ENCODE measurements at regions of chr1 and their contacts with region 1.

Region 1: DNA sequence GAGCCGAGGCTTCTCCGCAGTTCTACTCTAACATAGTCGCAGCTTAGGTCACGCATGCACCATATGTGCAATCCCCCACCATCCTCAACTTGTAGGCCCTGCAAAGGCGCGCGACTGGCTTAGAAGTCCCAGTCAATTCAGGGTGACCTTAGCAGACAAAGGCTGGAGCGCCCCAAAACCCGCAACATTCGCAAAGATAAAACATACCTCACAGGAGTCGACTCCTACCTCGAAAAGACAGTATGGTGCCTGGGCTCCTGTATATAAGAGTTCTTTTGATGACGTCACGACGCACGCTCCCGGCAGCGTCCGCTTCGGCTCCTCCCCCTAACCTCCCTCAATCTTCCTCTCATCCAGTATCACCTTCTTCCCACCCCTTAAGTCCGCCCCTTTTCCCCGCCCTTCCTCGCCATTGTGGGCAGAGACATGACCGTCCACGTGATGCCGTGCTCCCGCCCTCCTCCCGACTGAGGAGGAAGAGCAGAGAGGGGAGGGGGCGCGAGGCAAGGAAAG is at the start of gene GAS5:
- DNase-seq: peak; percentile 99 to 100 (median 99)
- ATAC-seq: peak; percentile 94 to 97 (median 96)
- H3K4me3 ChIP-seq: peak within 1 kb of the TSS; percentile 47 to 95 (median 85)
- H3K27ac ChIP-seq: peak within 1 kb of the TSS; percentile 94 to 99 (median 98)
- H3K4me1 ChIP-seq: peaks cover 8 to 70% (median 48%) of the 10 kb centered on the region in 12 donors
- H3K27me3 ChIP-seq: no peaks in the 10 kb centered on the region
- CTCF ChIP-seq: no peak
- POLR2A ChIP-seq: peak; percentile 94 to 99
- total RNA-seq, gene GAS5: 30.4 to 103 (median 43.6) TPM

Region 2: GRCh38 chr1:173476664-173477285 is 391.0 kb before region 1 on chr1:
- intact Hi-C with region 1: loop called in 2 of 10 experiments (anchors 2 to 5 kb)
- DNase-seq: peak; percentile 92 to 97 (median 94)
- ATAC-seq: peak; percentile 88 to 92 (median 91)
- H3K4me3 ChIP-seq: peak overlapping the region; percentile 52 to 96 (median 79)
- H3K27ac ChIP-seq: peak overlapping the region; percentile 66 to 99 (median 96)
- H3K4me1 ChIP-seq: peaks cover 0 to 61% (median 50%) of the 10 kb centered on the region in 12 donors
- H3K27me3 ChIP-seq: no peaks in the 10 kb centered on the region
- CTCF ChIP-seq: peak in 4 of 12 donors; percentile 15 to 32 (median 24)
- POLR2A ChIP-seq: peak in 1 of 2 donors; percentile 30

Region 3: DNA sequence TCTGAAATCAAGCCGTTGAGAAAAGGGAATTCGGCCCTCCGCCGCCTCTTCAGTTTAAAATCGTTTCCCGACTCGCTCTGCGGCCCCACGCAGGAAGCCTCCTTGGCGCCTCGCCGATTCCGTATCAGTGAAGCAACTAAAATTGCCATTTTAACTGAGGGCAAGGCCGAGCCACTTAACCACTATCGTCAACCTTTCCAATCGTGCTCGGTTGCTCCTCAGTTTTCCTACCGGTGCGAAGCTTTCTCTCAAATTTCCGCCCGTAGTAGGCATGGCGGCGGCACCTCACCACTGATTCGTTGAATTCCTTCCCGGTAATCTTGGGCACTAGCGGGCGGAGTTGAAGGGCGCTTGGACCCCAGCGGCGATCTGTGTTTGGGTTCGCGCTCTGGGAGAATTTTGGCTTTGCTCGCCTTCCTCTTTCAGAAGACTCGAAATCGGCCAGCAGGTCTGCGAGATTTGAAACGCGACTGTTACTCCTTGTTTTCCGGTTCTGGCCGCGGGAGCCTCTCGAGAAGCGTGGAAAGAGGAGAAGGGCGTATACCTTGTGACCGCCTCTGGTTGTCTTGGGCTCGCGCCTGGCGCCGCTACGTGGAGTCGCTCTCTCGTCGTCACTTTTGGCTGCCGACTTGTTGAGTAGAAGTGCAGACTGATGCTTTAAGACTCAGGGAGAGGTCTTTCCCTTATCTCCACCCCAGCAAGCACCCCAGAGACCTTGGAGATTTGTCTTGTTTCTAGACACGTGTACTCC is 43.3 kb before region 1 on chr1 and contains the starts of genes CENPL and DARS2:
- intact Hi-C with region 1: loop called in 2 of 10 experiments (anchors 1 to 2 kb)
- DNase-seq: peak; percentile 96 to 99 (median 96)
- ATAC-seq: peak; percentile 98 to 99 (median 99)
- H3K4me3 ChIP-seq: peak within 1 kb of the TSS; percentile 58 to 98 (median 78)
- H3K27ac ChIP-seq: peak within 1 kb of the TSS; percentile 87 to 97 (median 93)
- H3K4me1 ChIP-seq: peaks cover 0 to 29% (median 8%) of the 10 kb centered on the region in 12 donors
- H3K27me3 ChIP-seq: no peaks in the 10 kb centered on the region
- CTCF ChIP-seq: no peak
- POLR2A ChIP-seq: peak in 1 of 2 donors; percentile 21
- total RNA-seq, gene CENPL: 1.7 to 5.8 (median 3.5) TPM
- total RNA-seq, gene DARS2: 10.9 to 25.1 (median 15.9) TPM

Region 4: GRCh38 chr1:173937062-173937461 is 69.3 kb after region 1 on chr1:
- intact Hi-C with region 1: loop called in 1 of 10 experiments (anchors 10 kb)
- DNase-seq: no peak
- ATAC-seq: no peak
- H3K4me3 ChIP-seq: no peak overlapping the region
- H3K27ac ChIP-seq: no peak overlapping the region
- H3K4me1 ChIP-seq: no peaks in the 10 kb centered on the region
- H3K27me3 ChIP-seq: no peaks in the 10 kb centered on the region
- CTCF ChIP-seq: no peak
- POLR2A ChIP-seq: no peak

Region 5: DNA sequence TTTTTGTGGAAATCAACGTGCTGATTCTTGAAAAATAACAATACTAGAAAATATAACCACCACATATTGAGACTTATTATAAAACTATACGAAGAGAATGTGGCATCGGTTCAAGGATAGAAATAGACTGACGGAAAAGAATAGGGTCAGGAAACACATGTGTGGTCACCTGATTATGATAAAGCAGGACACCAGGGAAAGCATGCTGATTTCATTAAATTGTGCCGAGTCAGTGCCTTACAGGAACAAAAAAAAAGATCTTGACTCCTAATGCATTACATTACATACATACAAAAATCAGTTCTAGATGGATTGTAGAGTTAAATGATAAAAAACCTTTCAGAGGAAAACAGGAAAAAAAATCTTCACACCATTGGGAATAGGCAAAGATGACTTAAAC is 92.8 kb after region 1 on chr1:
- intact Hi-C with region 1: loop called in 1 of 10 experiments (anchors 10 kb)
- DNase-seq: no peak
- ATAC-seq: no peak
- H3K4me3 ChIP-seq: no peak overlapping the region
- H3K27ac ChIP-seq: peak overlapping the region in 2 of 12 donors; percentile 1 to 9
- H3K4me1 ChIP-seq: peaks cover 0 to 11% (median 5%) of the 10 kb centered on the region in 12 donors
- H3K27me3 ChIP-seq: no peaks in the 10 kb centered on the region
- CTCF ChIP-seq: no peak
- POLR2A ChIP-seq: no peak

Region 6: GRCh38 chr1:174022080-174022975 is 154.5 kb after region 1 on chr1 and contains the start of gene RC3H1:
- intact Hi-C with region 1: loop called in 4 of 10 experiments (anchors 2 to 5 kb)
- DNase-seq: peak; percentile 93 to 97 (median 94)
- ATAC-seq: peak; percentile 95 to 99 (median 98)
- H3K4me3 ChIP-seq: peak within 1 kb of the TSS; percentile 72 to 94 (median 85)
- H3K27ac ChIP-seq: peak within 1 kb of the TSS; percentile 84 to 99 (median 96)
- H3K4me1 ChIP-seq: peaks cover 5 to 52% (median 46%) of the 10 kb centered on the region in 12 donors
- H3K27me3 ChIP-seq: no peaks in the 10 kb centered on the region
- CTCF ChIP-seq: no peak
- POLR2A ChIP-seq: peak; percentile 86 to 99
- total RNA-seq, gene RC3H1: 14.7 to 32.0 (median 25.5) TPM

Region 7: DNA sequence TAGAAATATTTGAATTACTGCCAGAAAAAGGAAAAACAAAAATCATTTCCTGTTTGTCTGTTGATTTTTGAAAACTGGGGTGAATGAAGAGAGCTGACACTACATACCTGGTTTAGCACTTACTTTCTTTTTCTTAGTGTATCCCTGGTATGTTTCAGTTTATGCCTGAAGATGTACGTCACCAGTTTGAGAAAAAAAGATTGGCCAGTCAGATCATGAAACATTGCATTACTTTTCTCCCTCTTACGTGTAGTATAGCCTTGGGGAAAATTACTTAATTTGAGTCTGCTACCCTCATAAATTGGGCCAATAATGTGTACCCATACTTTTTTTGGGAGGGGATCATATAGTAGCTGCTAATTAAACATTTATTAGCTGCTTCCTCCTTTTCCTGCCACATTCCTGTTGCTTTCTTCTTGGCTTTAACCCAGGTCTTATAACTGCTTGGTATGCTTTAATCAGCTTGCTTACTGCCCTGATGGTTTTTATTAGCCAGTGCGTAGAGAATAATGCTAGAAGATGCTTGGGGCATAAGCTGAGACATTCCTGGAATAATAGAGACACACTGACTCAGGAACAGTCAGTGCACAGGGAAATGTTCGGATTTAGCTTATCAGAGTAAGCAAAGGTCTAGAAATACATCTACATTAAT is 323.6 kb after region 1 on chr1:
- intact Hi-C with region 1: no loop called
- DNase-seq: no peak
- ATAC-seq: no peak
- H3K4me3 ChIP-seq: no peak overlapping the region
- H3K27ac ChIP-seq: peak overlapping the region in 1 of 12 donors; percentile 30
- H3K4me1 ChIP-seq: peaks cover 0 to 21% (median 3%) of the 10 kb centered on the region in 12 donors
- H3K27me3 ChIP-seq: no peaks in the 10 kb centered on the region
- CTCF ChIP-seq: no peak
- POLR2A ChIP-seq: no peak